ENCODE measurements at regions of chr7 and their contacts with region 1.

Region 1: GRCh38 chr7:2444476-2444875 is 31.7 kb downstream of the GRIFIN start:
- DNase-seq: no peak
- H3K4me3 ChIP-seq: no peak overlapping the region
- H3K27ac ChIP-seq: peak overlapping the region; percentile 41 to 53 (median 46)
- H3K4me1 ChIP-seq: peaks cover 0 to 13% (median 3%) of the 10 kb centered on the region in 4 donors
- H3K27me3 ChIP-seq: no peaks in the 10 kb centered on the region
- CTCF ChIP-seq: no peak
- EP300 ChIP-seq: no peak
- POLR2A ChIP-seq: no peak

Region 2: GRCh38 chr7:2519119-2519930 is 74.8 kb after region 1 on chr7 and contains the start of gene LFNG:
- intact Hi-C with region 1: no loop called
- DNase-seq: peak; percentile 94
- H3K4me3 ChIP-seq: peak within 1 kb of the TSS; percentile 62 to 71 (median 64)
- H3K27ac ChIP-seq: peak within 1 kb of the TSS in 2 of 4 donors; percentile 6 to 54
- H3K4me1 ChIP-seq: peaks cover 40 to 60% (median 54%) of the 10 kb centered on the region in 4 donors
- H3K27me3 ChIP-seq: peaks cover 0 to 61% (median 33%) of the 10 kb centered on the region in 4 donors
- CTCF ChIP-seq: no peak
- EP300 ChIP-seq: no peak
- POLR2A ChIP-seq: no peak
- total RNA-seq, gene LFNG: 6.1 to 10.7 (median 8.3) TPM

Region 3: GRCh38 chr7:2537981-2538851 is 93.7 kb after region 1 on chr7:
- intact Hi-C with region 1: no loop called
- DNase-seq: no peak
- H3K4me3 ChIP-seq: no peak overlapping the region
- H3K27ac ChIP-seq: no peak overlapping the region
- H3K4me1 ChIP-seq: peaks cover 0 to 4% (median 0%) of the 10 kb centered on the region in 4 donors
- H3K27me3 ChIP-seq: no peaks in the 10 kb centered on the region
- CTCF ChIP-seq: no peak
- EP300 ChIP-seq: no peak
- POLR2A ChIP-seq: no peak

Region 4: DNA sequence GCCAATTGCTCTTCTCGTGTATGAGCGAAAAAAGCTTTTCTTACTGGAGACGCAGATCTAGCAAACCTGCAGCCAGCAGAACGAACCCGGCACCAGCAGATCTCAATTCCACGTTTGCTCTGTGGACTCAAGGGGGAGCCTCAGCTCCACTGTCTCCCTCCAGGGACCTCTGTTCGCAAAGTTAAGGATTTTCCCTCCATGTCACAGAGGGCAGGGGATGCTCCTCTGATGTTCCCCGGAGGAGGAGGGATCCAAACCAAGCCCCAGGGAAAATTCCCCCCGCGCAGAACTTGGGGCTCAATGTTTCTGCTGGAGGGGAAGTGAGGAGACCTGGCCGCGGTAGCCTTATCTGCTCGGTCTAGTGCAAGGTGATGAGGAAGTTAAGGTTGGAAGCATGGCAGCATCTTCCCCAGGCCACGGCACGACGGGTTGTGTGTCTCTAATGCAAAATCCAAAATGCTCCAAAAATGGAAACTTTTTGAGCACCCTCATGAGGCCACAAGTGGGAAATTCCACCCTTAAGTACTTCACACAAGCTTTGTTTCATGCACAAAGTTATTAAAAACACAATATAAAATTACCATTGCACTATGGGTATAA is 123.3 kb after region 1 on chr7:
- intact Hi-C with region 1: loop called (anchors 10 kb)
- DNase-seq: no peak
- H3K4me3 ChIP-seq: peak overlapping the region in 1 of 4 donors; percentile 20
- H3K27ac ChIP-seq: no peak overlapping the region
- H3K4me1 ChIP-seq: peaks cover 0 to 18% (median 11%) of the 10 kb centered on the region in 4 donors
- H3K27me3 ChIP-seq: no peaks in the 10 kb centered on the region
- CTCF ChIP-seq: peak; percentile 33 to 50 (median 34)
- EP300 ChIP-seq: no peak
- POLR2A ChIP-seq: no peak